GM10248 (cell line): ENCODE measurements at regions of chrX and their contacts with region 1.

Region 1: GRCh38 chrX:121227888-121228287 is 180.5 kb downstream of the GLUD2 start:
- DNase-seq: no peak
- CTCF ChIP-seq: no peak

Region 2: DNA sequence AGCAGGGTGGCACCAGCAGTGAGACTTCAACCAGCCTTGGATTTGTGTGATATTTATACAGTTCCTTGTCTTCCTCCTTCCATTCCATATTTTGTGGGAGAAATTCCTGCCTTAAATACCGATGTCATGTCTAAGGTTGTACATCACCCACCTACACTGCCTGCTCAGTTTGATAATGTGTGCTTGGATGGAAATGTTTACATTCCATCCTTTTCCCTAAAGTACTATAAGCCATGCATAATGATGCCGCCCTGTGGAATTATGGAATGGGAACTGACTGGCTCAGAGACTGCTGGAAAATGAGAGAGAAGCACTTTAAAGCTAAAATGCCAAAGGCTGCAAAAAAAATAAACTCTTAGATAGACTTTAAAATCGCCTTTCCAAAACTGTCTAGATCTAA is 191.8 kb before region 1 on chrX:
- CTCF ChIA-PET with region 1: no interaction called
- POLR2A ChIA-PET with region 1: no interaction called
- DNase-seq: no peak
- CTCF ChIP-seq: no peak

Region 3: GRCh38 chrX:121064579-121064978 is 163.3 kb before region 1 on chrX:
- CTCF ChIA-PET with region 1: no interaction called
- POLR2A ChIA-PET with region 1: no interaction called
- DNase-seq: no peak
- CTCF ChIP-seq: no peak

Region 4: GRCh38 chrX:121216641-121217374 is 11.1 kb before region 1 on chrX:
- CTCF ChIA-PET with region 1: interaction called, 15 read pairs
- POLR2A ChIA-PET with region 1: no interaction called
- DNase-seq: no peak
- CTCF ChIP-seq: no peak